Activated T-helper 2 cell treated with anti-CD3 and anti-CD28 coated beads, Interferon-gamma antibody, Interleukin-2, Interleukin-4, amounts not matched to agents 10 μg/mL and 5 μg/mL and 100 μg/mL, durations not matched to agents 14 hours and 24 hours and 36 hours (primary cell): ENCODE measurements at regions of chr10 and their contacts with region 1.

Region 1: DNA sequence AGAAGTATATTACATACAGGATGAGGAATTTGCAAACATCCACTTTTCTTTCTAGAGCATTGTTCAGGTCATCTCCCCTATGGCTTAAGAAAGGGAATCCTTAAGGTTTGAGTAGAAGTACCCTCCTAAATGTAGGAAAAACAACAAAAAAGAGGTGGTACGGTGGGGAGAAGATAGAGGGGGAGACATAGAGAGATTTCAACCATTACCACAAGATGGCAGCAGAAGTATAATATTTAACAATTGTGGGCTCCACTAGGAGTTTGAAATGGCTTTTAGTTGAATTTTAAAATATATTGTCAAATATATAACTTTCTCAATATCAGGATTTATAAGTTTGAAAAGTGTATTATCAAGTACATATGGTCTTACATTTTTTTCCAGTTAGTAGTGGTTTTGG is 72.7 kb upstream of the PRKG1 start:
- DNase-seq: no peak
- H3K4me3 Mint-ChIP-seq: no peak overlapping the region
- H3K27ac Mint-ChIP-seq: no peak overlapping the region
- H3K4me1 Mint-ChIP-seq: no peaks in the 10 kb centered on the region
- H3K27me3 Mint-ChIP-seq: peaks cover 18% of the 10 kb centered on the region

Region 2: GRCh38 chr10:52215745-52216361 is 1214.3 kb after region 1 on chr10:
- intact Hi-C with region 1: loop called (anchors 1 kb)
- DNase-seq: no peak
- H3K4me3 Mint-ChIP-seq: no peak overlapping the region
- H3K27ac Mint-ChIP-seq: no peak overlapping the region
- H3K4me1 Mint-ChIP-seq: no peaks in the 10 kb centered on the region
- H3K27me3 Mint-ChIP-seq: no peaks in the 10 kb centered on the region